ENCODE measurements at regions of chr9 and their contacts with region 1.

Region 1: GRCh38 chr9:92790542-92791527 is 26.2 kb upstream of the BICD2 start:
- DNase-seq: peak; percentile 16
- H3K4me3 ChIP-seq: no peak overlapping the region
- CTCF ChIP-seq: peak; percentile 76

Region 2: GRCh38 chr9:92716557-92716956 is 74.3 kb before region 1 on chr9:
- CTCF ChIA-PET with region 1: interaction called, 271 read pairs
- POLR2A ChIA-PET with region 1: no interaction called
- DNase-seq: no peak
- H3K4me3 ChIP-seq: no peak overlapping the region
- CTCF ChIP-seq: peak; percentile 89

Region 3: DNA sequence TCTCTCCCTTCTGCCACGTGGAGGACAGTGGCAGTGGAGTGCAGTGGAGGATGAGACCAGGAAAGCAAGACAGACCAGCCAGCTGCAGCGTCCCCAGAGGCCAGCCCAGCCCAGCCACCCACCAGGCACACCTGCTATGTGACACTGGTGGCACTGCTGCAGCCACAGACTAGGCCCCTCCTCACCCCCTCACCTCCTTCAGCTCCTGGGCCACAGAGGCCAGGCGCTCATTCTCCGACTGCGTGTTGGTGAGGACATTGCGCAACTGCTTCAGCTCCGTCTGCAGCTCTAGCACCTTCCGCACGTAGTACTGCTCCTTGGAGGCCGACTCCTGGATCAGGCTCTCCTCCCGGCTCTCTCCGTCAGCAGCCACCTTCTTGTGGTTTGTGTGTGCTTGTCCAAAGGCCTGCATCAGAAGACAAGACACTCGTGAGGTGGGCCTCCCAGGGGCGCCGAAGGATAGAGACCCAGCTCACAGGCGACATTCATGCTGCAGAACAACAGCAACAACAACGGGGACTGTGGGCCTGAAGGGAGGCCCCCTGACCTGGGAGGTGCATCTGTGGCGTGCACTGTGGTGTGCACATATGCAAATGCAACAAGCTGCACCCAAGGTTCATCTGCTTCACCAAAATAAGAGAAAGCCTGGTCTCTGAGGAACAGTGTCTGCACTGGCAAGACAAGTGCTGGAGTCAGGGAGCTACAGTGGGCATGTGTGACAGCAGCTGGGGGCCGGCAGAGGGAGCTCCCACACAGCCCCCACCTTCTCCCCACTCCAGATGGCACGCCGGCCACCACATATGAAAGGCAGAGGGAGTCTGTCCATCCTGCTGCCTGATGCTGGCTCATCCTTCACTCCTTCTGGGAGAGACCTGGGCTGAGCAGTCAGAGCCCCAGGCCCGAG is 61.8 kb before region 1 on chr9:
- CTCF ChIA-PET with region 1: interaction called, 271 read pairs
- POLR2A ChIA-PET with region 1: no interaction called
- DNase-seq: no peak
- H3K4me3 ChIP-seq: no peak overlapping the region
- CTCF ChIP-seq: peak; percentile 77

Region 4: GRCh38 chr9:92737207-92737606 is 53.6 kb before region 1 on chr9:
- CTCF ChIA-PET with region 1: interaction called, 29 read pairs
- POLR2A ChIA-PET with region 1: no interaction called
- DNase-seq: no peak
- H3K4me3 ChIP-seq: no peak overlapping the region
- CTCF ChIP-seq: no peak

Region 5: GRCh38 chr9:92764988-92765936 is 25.6 kb before region 1 on chr9:
- CTCF ChIA-PET with region 1: interaction called, 11 read pairs
- POLR2A ChIA-PET with region 1: no interaction called
- DNase-seq: peak; percentile 77
- H3K4me3 ChIP-seq: peak overlapping the region; percentile 74
- CTCF ChIP-seq: peak; percentile 98

Region 6: DNA sequence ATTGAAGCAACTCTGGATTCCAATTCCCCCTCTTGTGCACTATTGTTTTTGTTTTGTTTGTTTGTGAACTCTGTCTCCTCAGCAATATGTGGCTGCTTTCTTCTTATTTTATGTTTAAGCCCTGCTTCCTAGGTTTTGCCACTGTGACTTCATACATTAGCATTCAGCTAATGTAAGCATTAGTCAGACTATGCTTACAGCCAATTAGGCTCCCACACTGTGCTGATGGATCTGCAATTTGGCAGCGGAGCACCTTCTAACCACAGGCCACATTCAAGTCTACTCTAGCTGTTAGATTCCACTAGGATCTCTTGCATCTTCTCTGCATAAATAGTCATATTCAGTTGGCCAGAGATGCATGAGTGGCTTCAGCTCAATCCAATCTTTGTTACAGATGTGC is 16.6 kb before region 1 on chr9:
- CTCF ChIA-PET with region 1: interaction called, 22 read pairs
- POLR2A ChIA-PET with region 1: no interaction called
- DNase-seq: peak; percentile 95
- H3K4me3 ChIP-seq: no peak overlapping the region
- CTCF ChIP-seq: no peak

Region 7: GRCh38 chr9:92780206-92780605 is 10.6 kb before region 1 on chr9:
- CTCF ChIA-PET with region 1: interaction called, 22 read pairs
- POLR2A ChIA-PET with region 1: no interaction called
- DNase-seq: no peak
- H3K4me3 ChIP-seq: no peak overlapping the region
- CTCF ChIP-seq: no peak

Measured in AG04449 (cell line).